Mammary epithelial cell (primary cell): ENCODE measurements at regions of chr1 and their contacts with region 1.

Region 1: DNA sequence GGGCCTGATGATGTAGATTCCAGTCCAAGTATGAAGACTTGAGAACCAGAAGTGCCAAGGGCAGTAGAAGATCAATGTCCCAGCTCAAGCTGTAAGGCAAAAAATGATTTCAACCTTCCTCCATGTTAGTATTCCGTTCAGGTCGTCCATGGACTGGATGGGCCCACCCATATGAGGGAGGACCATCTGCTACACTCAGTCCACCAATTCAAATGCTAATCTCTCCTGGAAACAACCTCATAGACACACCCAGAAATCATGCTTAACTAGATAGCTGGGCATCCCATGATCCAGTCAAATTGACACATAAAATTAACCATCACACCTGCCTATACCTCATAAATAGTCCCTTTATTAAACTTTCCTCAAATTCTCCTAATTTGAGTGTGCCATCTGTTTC is 73.3 kb upstream of the NFASC start:
- DNase-seq: no peak
- H3K4me3 ChIP-seq: no peak overlapping the region
- H3K27ac ChIP-seq: no peak overlapping the region
- H3K4me1 ChIP-seq: no peaks in the 10 kb centered on the region
- H3K27me3 ChIP-seq: no peaks in the 10 kb centered on the region
- CTCF ChIP-seq: no peak

Region 2: DNA sequence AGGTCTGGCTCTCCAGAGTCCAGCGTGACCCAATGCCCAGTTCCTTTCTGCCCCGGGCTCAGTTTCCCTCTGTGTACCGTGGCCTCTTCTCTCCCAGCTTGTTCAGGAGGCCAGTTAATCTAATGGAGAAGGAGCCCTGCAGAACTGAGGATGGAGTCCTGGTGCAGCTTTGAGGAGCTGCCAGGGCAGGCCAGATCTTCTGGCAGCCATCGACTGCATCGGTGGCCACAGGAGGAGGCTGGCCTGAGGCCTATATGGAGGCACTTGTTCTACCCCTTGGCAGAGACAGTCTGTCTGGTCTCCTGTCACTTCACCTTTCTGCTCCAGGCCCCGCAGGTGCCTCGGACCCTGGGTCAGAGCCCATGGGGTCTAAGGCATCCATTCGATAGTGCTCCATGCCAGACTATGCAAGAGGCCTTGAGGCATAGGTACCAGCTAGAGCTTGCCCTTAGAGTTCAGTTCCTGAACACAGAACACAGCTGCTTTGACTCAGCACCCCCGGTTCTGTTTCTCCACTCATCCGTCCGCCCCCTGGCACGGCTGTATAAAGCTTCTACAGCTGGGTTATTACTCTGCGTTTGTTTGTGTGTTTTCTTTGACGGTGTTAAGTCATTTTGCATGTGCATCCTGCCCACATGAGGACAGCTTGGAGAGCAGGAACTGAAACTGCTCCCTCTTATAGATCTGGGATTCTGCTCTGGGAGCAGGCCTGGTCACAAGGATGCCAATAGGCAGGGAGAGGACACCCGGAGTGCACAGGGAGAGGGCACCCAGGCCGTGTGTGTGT is 93.4 kb before region 1 on chr1:
- CTCF ChIA-PET with region 1: no interaction called
- dilution Hi-C with region 1: loop called (anchors 5 kb)
- in situ Hi-C with region 1: no loop called
- intact Hi-C with region 1: no loop called
- DNase-seq: no peak
- H3K4me3 ChIP-seq: no peak overlapping the region
- H3K27ac ChIP-seq: no peak overlapping the region
- H3K4me1 ChIP-seq: peaks cover 10% of the 10 kb centered on the region
- H3K27me3 ChIP-seq: no peaks in the 10 kb centered on the region
- CTCF ChIP-seq: no peak

Region 3: GRCh38 chr1:204746838-204747442 is 50.5 kb before region 1 on chr1:
- CTCF ChIA-PET with region 1: no interaction called
- dilution Hi-C with region 1: no loop called
- in situ Hi-C with region 1: no loop called
- intact Hi-C with region 1: no loop called
- DNase-seq: peak; percentile 25
- H3K4me3 ChIP-seq: no peak overlapping the region
- H3K27ac ChIP-seq: no peak overlapping the region
- H3K4me1 ChIP-seq: peaks cover 6% of the 10 kb centered on the region
- H3K27me3 ChIP-seq: no peaks in the 10 kb centered on the region
- CTCF ChIP-seq: peak; percentile 88 to 97